HCT116 (cell line): ENCODE measurements at regions of chr17 and their contacts with region 1.

Region 1: DNA sequence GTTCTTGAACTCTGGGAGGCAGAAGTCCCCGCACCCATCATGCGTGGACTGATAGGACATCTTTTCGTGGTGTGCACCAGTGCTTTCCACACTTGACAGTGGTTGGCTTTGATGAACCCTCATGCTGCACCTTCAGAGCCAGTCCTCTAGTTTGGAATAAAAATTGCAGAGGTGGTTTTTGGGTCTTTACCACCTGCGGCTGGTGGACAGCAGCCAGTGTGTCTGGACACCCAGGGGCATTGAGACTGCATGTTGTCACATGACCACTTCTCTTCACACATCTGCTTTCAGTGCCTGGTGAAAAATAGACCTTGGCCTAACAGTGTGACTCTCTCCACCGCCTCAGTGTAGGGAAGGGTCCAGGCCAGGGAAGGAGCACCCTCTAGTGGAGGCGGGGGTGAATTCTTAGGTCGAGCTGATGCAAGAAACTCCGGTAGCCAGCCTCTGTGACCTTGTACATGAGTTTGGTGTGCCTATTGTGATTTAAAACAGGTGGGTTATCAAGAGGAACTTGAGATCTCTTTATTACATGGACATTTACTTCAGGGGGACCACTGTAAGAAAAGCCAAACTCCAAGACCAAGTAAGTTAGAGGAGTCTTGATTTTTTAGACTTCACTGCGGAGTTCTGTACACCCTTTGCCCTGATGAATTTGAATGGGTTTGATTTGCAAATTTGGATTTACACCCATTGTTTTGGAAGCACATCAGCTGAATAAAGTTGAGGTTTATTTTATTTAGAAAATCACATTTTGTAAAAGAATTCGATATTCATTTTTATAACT is 17.9 kb downstream of the GOSR2 start:
- DNase-seq: peak; percentile 66
- ATAC-seq: peak; percentile 84
- H3K4me3 ChIP-seq: no peak overlapping the region
- H3K27ac ChIP-seq: no peak overlapping the region
- H3K4me1 ChIP-seq: no peaks in the 10 kb centered on the region
- H3K27me3 ChIP-seq: no peaks in the 10 kb centered on the region
- CTCF ChIP-seq: peak; percentile 82 to 99 (median 97)
- POLR2A ChIP-seq: no peak
- RAD21 ChIP-seq: peak; percentile 89

Region 2: DNA sequence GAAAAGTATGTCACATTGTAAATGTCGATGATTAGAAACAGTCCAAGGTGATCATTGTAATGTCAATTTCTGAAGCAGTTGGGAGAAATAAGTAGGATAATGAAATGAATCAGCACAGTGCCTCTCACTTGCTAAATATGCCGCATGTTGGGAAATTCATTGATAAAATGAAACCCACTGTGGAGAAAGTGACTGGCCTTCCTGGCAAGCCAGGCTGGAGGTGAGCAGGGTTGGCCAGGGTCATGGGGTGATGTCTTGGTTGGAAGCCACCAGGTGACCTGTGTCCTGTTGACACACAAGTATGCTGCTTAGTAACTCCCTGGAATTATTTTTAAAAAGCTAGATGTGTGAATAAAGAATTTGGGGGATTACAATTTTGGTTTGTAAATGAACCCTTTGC is 104.3 kb before region 1 on chr17:
- CTCF ChIA-PET with region 1: no interaction called
- POLR2A ChIA-PET with region 1: no interaction called
- RAD21 ChIA-PET with region 1: no interaction called
- intact Hi-C with region 1: loop called (anchors 5 kb)
- DNase-seq: no peak
- ATAC-seq: no peak
- H3K4me3 ChIP-seq: no peak overlapping the region
- H3K27ac ChIP-seq: no peak overlapping the region
- H3K4me1 ChIP-seq: peaks cover 0 to 3% of the 10 kb centered on the region in 2 experiments; a peak in 1 of 4 replicates
- H3K27me3 ChIP-seq: no peaks in the 10 kb centered on the region
- CTCF ChIP-seq: no peak
- POLR2A ChIP-seq: no peak
- RAD21 ChIP-seq: no peak

Region 3: DNA sequence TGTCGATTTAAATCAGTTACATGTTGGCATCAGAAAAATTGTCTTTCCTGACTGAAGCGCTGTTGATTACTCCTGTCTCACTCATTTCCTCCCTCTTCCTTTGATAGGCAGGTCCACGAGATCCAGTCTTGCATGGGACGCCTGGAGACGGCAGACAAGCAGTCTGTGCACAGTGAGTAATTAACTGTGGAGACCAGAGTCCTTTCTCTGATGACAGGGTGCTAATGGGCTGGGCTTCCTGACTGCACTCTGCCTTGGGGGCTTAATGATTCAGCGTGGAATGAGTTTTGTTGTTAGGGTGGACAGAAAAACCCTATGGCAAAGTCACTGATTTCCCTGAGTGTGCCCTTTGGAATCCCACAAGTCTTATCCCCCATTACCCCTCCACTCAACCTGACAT is 11.4 kb before region 1 on chr17:
- CTCF ChIA-PET with region 1: interaction called, 15 read pairs
- POLR2A ChIA-PET with region 1: interaction called, 4 read pairs
- RAD21 ChIA-PET with region 1: no interaction called
- intact Hi-C with region 1: no loop called
- DNase-seq: no peak
- ATAC-seq: no peak
- H3K4me3 ChIP-seq: no peak overlapping the region
- H3K27ac ChIP-seq: no peak overlapping the region
- H3K4me1 ChIP-seq: peaks cover under 1 to 4% of the 10 kb centered on the region in 2 experiments
- H3K27me3 ChIP-seq: no peaks in the 10 kb centered on the region
- CTCF ChIP-seq: no peak
- POLR2A ChIP-seq: no peak
- RAD21 ChIP-seq: no peak

Region 4: DNA sequence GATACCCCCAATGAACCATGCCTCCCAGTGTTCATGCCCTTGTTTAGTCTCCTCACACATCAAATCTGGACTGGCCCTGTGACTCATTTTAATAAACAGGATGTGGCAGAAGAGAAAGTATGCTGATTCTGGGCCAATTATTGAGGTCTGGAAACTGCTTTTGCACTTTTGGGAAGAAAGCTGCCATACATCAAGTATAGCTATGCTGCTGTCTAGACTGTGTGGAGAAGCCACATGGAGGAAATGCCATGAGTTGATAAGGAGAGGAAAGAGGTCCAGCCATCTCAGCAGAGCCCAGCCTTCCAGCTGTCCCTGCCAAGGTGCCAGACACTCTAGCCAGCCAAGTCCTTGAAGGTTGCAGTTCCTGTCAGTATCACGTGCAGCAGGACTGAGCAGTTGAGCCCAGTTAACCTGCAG is 21.6 kb after region 1 on chr17:
- CTCF ChIA-PET with region 1: interaction called, 10 read pairs
- POLR2A ChIA-PET with region 1: interaction called, 3 read pairs
- RAD21 ChIA-PET with region 1: no interaction called
- intact Hi-C with region 1: no loop called
- DNase-seq: no peak
- ATAC-seq: peak; percentile 66
- H3K4me3 ChIP-seq: no peak overlapping the region
- H3K27ac ChIP-seq: no peak overlapping the region
- H3K4me1 ChIP-seq: peaks cover 0 to 9% of the 10 kb centered on the region in 2 experiments; a peak in 2 of 4 replicates
- H3K27me3 ChIP-seq: no peaks in the 10 kb centered on the region
- CTCF ChIP-seq: no peak
- POLR2A ChIP-seq: no peak
- RAD21 ChIP-seq: no peak

Region 5: DNA sequence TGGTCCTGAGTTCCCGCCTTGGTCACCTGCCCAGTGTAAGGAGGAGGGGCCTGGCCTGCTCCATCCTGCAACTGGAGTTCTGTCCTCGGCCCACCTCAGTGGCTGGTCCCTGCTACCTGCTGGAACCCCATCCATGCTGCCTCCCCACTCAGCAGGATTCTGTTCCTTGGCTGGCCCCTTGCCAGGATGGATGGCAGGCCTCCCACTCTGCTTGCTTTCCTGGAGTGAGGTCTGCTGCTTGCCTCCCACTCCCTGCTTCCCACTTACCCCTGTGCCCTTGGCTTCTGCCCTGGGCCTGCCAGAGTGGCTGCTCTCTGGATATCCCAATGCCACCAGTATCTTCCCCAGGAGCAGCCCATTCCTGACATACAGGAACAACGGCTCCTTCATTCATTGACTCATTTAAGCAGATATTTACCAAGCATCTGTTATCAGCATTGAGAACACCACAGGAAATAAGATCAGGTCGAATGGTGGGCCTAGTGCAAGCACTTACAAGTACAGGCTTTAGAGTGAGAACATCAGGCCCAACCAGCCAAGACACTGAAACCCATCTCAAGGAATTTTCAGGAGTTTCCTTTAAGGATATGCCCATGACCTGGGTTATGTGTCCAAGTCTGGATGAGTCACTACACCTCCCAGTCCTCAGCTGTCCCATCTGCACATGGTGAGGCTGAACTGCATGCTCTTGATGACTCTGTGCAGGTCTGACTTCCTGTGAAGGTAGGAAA is 55.2 kb after region 1 on chr17:
- CTCF ChIA-PET with region 1: interaction called, 20 read pairs
- POLR2A ChIA-PET with region 1: no interaction called
- RAD21 ChIA-PET with region 1: no interaction called
- intact Hi-C with region 1: loop called (anchors 1 kb)
- DNase-seq: no peak
- ATAC-seq: no peak
- H3K4me3 ChIP-seq: no peak overlapping the region
- H3K27ac ChIP-seq: no peak overlapping the region
- H3K4me1 ChIP-seq: peaks cover 0 to 7% of the 10 kb centered on the region in 2 experiments; a peak in 2 of 4 replicates
- H3K27me3 ChIP-seq: no peaks in the 10 kb centered on the region
- CTCF ChIP-seq: no peak
- POLR2A ChIP-seq: no peak
- RAD21 ChIP-seq: no peak

Region 6: GRCh38 chr17:47315451-47316266 is 374.8 kb after region 1 on chr17:
- CTCF ChIA-PET with region 1: interaction called, 12 read pairs
- POLR2A ChIA-PET with region 1: no interaction called
- RAD21 ChIA-PET with region 1: no interaction called
- intact Hi-C with region 1: loop called (anchors 1 kb)
- DNase-seq: peak; percentile 74
- ATAC-seq: peak; percentile 97
- H3K4me3 ChIP-seq: no peak overlapping the region
- H3K27ac ChIP-seq: no peak overlapping the region
- H3K4me1 ChIP-seq: peaks cover 0 to 4% of the 10 kb centered on the region in 2 experiments; a peak in 1 of 4 replicates
- H3K27me3 ChIP-seq: no peaks in the 10 kb centered on the region
- CTCF ChIP-seq: peak; percentile 81 to 98 (median 96)
- POLR2A ChIP-seq: no peak
- RAD21 ChIP-seq: peak; percentile 98

Region 7: DNA sequence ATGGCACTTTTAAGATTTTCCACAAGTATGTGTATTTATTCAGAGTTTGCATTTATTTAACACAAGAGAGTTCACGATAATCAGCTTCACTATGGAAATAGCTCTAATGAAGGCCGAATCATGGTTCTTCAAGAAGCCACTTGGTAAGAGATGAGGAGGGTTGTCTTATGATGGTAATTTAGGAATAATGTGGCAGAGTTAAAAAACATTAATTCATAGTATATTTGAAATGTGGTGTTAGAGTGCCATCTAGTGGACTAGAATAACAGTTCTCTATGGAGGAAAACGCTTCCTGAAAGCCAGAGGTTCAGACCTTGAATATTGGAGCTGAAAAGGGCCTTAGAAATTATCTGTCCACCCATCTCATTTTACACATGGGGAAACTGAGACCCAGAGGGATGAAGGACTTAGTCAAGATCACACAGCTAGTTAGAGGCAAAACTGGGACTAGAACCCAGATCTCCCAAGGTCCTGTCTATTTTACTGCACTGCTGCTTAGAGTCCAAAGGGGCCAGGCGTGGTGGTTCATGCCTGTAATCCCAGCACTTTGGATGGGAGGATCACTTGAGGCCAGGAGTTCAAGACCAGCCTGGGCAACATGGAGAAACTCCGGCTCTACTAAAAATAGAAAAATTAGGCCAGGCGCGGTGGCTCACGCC is 675.1 kb after region 1 on chr17:
- CTCF ChIA-PET with region 1: interaction called, 11 read pairs
- POLR2A ChIA-PET with region 1: no interaction called
- RAD21 ChIA-PET with region 1: no interaction called
- intact Hi-C with region 1: loop called (anchors 5 kb)
- DNase-seq: peak; percentile 52
- ATAC-seq: peak; percentile 64
- H3K4me3 ChIP-seq: no peak overlapping the region
- H3K27ac ChIP-seq: no peak overlapping the region
- H3K4me1 ChIP-seq: peaks cover 18 to 59% of the 10 kb centered on the region in 2 experiments
- H3K27me3 ChIP-seq: no peaks in the 10 kb centered on the region
- CTCF ChIP-seq: peak; percentile 59 to 93 (median 83)
- POLR2A ChIP-seq: no peak
- RAD21 ChIP-seq: peak; percentile 90